MCF 10A (cell line): ENCODE measurements at regions of chr20 and their contacts with region 1.

Region 1: DNA sequence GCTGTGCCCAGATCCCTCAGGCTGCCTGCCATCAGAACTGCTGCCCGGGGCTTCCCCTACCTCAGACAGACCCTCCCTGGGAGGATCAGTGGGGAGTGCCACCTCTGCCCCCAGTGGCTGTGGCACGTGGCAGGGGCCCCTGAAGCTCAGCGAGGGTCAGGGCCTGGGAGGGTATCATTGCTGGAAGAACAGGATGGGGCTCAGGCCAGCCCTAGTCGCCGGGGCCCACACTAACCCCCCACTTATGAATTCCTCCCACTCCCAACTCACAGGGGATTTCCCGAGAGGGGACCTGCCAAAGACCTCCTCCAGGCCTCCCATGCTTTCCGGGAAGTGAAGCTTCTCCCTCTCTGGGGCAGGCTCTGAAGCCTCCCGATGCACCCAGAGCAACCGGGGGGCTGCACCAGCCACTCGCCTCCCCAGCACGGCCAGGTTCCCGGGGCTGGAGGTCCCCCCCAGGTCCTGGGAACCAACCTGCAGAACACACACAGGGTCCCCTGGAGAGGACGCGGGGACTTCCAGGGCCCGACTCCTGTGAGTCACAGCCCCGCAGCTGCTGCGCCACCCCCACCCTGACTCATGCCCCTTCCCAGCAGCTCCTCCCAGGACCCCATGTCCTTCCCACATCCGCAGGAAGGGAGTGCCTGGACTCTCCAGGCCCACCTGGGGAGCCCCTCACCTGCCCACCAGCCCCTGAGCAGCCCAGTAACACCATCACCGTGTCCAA is 2.5 kb downstream of the TNFRSF6B start:
- DNase-seq: peak; percentile 94
- H3K4me3 Mint-ChIP-seq: peak overlapping the region; percentile 72
- H3K27ac Mint-ChIP-seq: peak overlapping the region; percentile 75
- H3K4me1 Mint-ChIP-seq: peaks cover 17% of the 10 kb centered on the region
- H3K27me3 Mint-ChIP-seq: no peaks in the 10 kb centered on the region
- CTCF ChIP-seq: no peak

Region 2: GRCh38 chr20:63381807-63382322 is 317.0 kb before region 1 on chr20:
- CTCF ChIA-PET with region 1: no interaction called
- POLR2A ChIA-PET with region 1: no interaction called
- intact Hi-C with region 1: no loop called
- DNase-seq: peak; percentile 13
- H3K4me3 Mint-ChIP-seq: no peak overlapping the region
- H3K27ac Mint-ChIP-seq: no peak overlapping the region
- H3K4me1 Mint-ChIP-seq: no peaks in the 10 kb centered on the region
- H3K27me3 Mint-ChIP-seq: peaks cover 28% of the 10 kb centered on the region
- CTCF ChIP-seq: peak; percentile 97

Region 3: GRCh38 chr20:63580796-63581461 is 118.0 kb before region 1 on chr20:
- CTCF ChIA-PET with region 1: no interaction called
- POLR2A ChIA-PET with region 1: no interaction called
- intact Hi-C with region 1: loop called (anchors 2 kb)
- DNase-seq: peak; percentile 74
- H3K4me3 Mint-ChIP-seq: no peak overlapping the region
- H3K27ac Mint-ChIP-seq: no peak overlapping the region
- H3K4me1 Mint-ChIP-seq: no peaks in the 10 kb centered on the region
- H3K27me3 Mint-ChIP-seq: no peaks in the 10 kb centered on the region
- CTCF ChIP-seq: peak; percentile 66

Region 4: GRCh38 chr20:63686492-63687321 is 12.2 kb before region 1 on chr20:
- CTCF ChIA-PET with region 1: interaction called, 5 read pairs
- POLR2A ChIA-PET with region 1: interaction called, 59 read pairs
- intact Hi-C with region 1: loop called (anchors 2 kb)
- DNase-seq: peak; percentile 85
- H3K4me3 Mint-ChIP-seq: no peak overlapping the region
- H3K27ac Mint-ChIP-seq: no peak overlapping the region
- H3K4me1 Mint-ChIP-seq: peaks cover 12% of the 10 kb centered on the region
- H3K27me3 Mint-ChIP-seq: no peaks in the 10 kb centered on the region
- CTCF ChIP-seq: no peak

Region 5: GRCh38 chr20:63739130-63740069 is 40.5 kb after region 1 on chr20 and contains the start of gene SLC2A4RG:
- CTCF ChIA-PET with region 1: interaction called, 4 read pairs
- POLR2A ChIA-PET with region 1: interaction called, 32 read pairs
- intact Hi-C with region 1: no loop called
- DNase-seq: peak; percentile 76
- H3K4me3 Mint-ChIP-seq: peak within 1 kb of the TSS; percentile 74
- H3K27ac Mint-ChIP-seq: no peak within 1 kb of the TSS
- H3K4me1 Mint-ChIP-seq: no peaks in the 10 kb centered on the region
- H3K27me3 Mint-ChIP-seq: no peaks in the 10 kb centered on the region
- CTCF ChIP-seq: no peak
- total RNA-seq, gene SLC2A4RG: 85.0 and 105 TPM in 2 replicates

Region 6: GRCh38 chr20:63955827-63956663 is 257.1 kb after region 1 on chr20 and contains the start of gene UCKL1:
- CTCF ChIA-PET with region 1: interaction called, 3 read pairs
- POLR2A ChIA-PET with region 1: interaction called, 23 read pairs
- intact Hi-C with region 1: no loop called
- DNase-seq: peak; percentile 81
- H3K4me3 Mint-ChIP-seq: peak within 1 kb of the TSS; percentile 74
- H3K27ac Mint-ChIP-seq: no peak within 1 kb of the TSS
- H3K4me1 Mint-ChIP-seq: peaks cover 21% of the 10 kb centered on the region
- H3K27me3 Mint-ChIP-seq: no peaks in the 10 kb centered on the region
- CTCF ChIP-seq: no peak
- total RNA-seq, gene UCKL1: 38.6 and 43.7 TPM in 2 replicates